ENCODE measurements at regions of chr10 and their contacts with region 1.

Region 1: DNA sequence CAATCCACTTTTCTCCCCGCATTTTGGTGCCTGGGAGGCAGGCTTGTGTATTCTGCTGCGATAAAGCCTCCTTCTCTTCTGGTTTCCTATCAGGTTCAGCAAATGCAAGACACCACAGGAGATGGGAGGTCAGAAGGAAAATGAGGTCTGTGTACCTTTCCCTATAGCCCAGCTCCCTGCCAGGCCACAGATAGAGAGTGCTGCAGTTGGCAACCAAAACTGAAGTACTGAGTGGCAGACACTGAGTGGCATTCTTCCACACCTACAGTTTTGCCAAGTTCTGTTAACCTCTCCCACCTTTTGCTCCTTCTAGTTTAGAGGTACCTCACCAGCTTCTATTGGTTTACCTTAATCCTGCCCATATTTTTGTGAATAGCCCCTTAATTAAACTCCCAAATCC is 948.4 kb downstream of the SORCS1 start:
- DNase-seq: no peak
- H3K4me3 ChIP-seq: no peak overlapping the region
- CTCF ChIP-seq: no peak

Region 2: DNA sequence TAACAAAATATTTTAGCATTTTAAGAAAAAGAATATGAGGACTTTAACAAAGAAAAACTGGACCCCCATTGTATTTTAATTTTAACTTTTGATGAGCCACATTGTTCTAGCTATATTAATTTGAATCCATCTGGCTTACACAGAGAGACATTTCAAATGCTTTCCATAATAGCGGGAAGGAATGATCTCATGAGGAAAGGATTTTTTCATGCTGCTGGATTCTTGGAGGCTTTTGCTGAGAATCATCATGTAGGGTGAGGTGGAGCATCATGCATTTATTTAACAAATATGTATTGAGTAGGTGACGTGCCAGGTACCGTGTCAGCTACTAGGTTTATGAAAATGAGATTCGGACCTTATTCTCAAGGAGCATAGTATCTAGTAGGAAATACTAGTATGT is 57.8 kb before region 1 on chr10:
- in situ Hi-C with region 1: loop called (anchors 5 kb)
- DNase-seq: no peak
- H3K4me3 ChIP-seq: no peak overlapping the region
- CTCF ChIP-seq: no peak

Region 3: DNA sequence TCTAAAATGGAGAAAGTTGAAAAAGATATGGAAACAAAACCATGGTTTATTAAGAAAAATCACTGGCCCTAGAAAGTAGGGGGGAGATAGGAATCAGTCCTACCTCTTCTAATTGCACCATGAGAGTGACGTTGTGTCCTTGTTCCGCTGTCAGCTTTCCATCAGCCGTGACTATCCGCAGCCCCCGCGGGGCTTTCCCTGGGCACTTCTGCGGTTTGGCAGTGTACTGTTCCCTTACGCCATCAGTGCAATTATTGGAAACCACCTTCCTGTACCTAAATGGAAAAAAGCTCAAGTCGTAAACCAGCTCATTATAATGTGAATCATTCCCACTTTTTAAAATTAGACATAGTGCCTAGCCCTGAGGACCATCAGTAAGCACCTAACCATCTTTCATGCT is 436.2 kb after region 1 on chr10:
- in situ Hi-C with region 1: no loop called
- DNase-seq: no peak
- H3K4me3 ChIP-seq: no peak overlapping the region
- CTCF ChIP-seq: no peak

Measured in astrocyte of the cerebellum (primary cell).